ENCODE measurements at regions of chr11 and their contacts with region 1.

Region 1: GRCh38 chr11:12813371-12814225 is 139.4 kb downstream of the TEAD1 start:
- DNase-seq: no peak
- H3K4me3 Mint-ChIP-seq: no peak overlapping the region
- H3K27ac Mint-ChIP-seq: no peak overlapping the region
- H3K4me1 Mint-ChIP-seq: peaks cover 37% of the 10 kb centered on the region
- H3K27me3 Mint-ChIP-seq: peaks cover 45% of the 10 kb centered on the region

Region 2: DNA sequence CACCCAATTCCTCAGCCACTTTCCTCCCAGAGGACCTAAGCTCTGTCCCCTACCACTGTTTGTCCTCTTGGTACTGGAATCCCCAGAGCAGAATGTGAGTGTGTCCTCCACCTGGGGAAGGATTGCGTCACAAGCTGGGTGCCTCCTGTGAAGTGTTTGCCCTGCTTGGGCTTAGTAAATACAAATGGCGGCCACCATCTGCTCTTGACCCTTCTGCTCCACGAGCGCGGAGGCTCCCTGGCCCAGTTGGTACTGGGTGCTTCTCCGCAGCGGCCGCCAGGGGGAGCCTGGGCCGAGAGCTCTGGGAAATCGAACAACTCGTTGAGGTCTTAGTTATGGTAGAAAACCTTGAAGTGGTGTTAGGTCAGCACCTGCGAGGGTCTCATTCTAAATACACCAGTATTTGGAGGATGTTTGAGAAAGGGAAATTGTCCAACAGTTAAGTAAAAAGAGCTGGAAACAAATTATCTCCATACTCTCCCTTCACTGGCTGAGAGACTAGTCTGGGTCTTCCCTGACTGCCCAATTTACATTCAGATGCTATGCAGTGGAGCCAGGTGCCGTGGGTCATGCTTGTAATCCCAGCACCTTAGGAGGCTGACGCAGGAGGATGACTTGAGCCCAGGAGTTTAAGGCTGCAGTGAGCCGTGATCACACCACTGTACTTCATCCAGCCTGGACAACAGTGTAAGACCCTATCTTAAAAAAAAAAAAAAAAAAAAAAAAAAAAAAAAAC is 214.0 kb before region 1 on chr11:
- CTCF ChIA-PET with region 1: interaction called, 22 read pairs
- DNase-seq: peak; percentile 52
- H3K4me3 Mint-ChIP-seq: no peak overlapping the region
- H3K27ac Mint-ChIP-seq: no peak overlapping the region
- H3K4me1 Mint-ChIP-seq: peaks cover 15% of the 10 kb centered on the region
- H3K27me3 Mint-ChIP-seq: peaks cover 15% of the 10 kb centered on the region

Region 3: DNA sequence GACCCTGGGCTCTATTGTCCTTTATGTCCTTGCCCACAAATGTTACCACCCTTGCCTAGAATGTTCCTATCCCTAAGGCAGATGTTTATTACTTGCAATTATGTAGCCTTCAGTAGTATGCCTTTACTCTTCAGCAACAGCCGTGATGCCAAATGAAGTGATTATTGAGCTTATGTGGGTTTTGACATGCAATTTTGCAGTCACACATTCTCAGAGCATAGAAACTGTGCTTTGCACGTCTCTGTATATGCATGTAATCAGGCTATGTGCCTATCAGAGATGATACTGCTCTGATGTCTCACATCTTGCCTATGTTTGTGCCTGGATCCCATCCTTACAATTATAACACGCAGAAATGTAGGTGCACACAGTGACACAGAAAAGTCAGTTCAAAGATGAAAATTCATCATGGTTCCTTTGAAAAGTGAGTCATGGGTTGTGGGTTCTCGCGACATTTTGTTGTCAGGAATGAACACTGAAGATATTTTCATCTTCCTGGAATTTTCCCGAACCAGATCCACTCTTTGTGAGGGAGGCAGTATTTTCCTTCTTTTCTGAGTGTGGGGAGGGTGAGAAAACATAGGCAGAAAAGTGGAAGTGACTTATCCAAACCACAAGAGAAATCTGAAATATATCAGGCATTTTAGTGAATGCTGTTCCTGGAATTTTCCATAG is 545.1 kb after region 1 on chr11:
- CTCF ChIA-PET with region 1: no interaction called
- DNase-seq: no peak
- H3K4me3 Mint-ChIP-seq: no peak overlapping the region
- H3K27ac Mint-ChIP-seq: no peak overlapping the region
- H3K4me1 Mint-ChIP-seq: peaks cover 4% of the 10 kb centered on the region
- H3K27me3 Mint-ChIP-seq: no peaks in the 10 kb centered on the region